ENCODE measurements at regions of chr5 and their contacts with region 1.

Region 1: DNA sequence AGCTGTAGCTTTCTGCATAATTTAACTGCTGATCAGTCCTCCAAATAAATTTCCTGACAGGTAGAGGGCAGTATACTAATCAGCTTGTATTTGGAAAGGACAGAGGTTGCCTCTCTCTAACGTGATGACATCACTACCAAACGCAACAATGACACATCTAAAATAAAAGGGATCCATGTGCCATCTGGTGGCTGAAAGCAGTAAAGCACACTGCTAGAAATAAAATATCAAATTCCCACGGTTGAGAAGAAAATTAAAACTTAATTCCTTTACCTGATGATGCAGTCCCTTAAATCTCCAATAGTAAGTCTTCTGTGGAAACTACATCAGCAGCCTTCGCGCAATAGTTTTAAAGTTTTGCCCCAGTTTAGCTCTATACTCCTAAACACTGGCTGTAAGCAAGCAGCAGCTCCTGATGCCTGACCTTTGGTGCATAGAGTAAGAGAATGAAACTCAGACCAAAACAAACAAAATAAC is 54.5 kb downstream of the DIAPH1 start:
- DNase-seq: peak in 3 of 5 donors; percentile 51 to 75 (median 72)
- ATAC-seq: peak; percentile 50 to 70 (median 59)
- H3K4me3 ChIP-seq: no peak overlapping the region
- H3K27ac ChIP-seq: peak overlapping the region in 11 of 12 donors; percentile 37 to 75 (median 61)
- H3K4me1 ChIP-seq: peaks cover 3 to 35% (median 23%) of the 10 kb centered on the region in 12 donors
- H3K27me3 ChIP-seq: no peaks in the 10 kb centered on the region
- CTCF ChIP-seq: peak; percentile 93 to 99 (median 96)
- POLR2A ChIP-seq: no peak

Region 2: GRCh38 chr5:141094481-141095262 is 469.6 kb before region 1 on chr5 and contains the start of gene PCDHB2:
- intact Hi-C with region 1: loop called in 3 of 10 experiments (anchors 10 kb)
- DNase-seq: peak in 2 of 5 donors; percentile 27 to 71
- ATAC-seq: peak; percentile 45 to 79 (median 52)
- H3K4me3 ChIP-seq: peak within 1 kb of the TSS in 11 of 12 donors; percentile 2 to 62 (median 44)
- H3K27ac ChIP-seq: peak within 1 kb of the TSS in 2 of 12 donors; percentile 36 to 37
- H3K4me1 ChIP-seq: no peaks in the 10 kb centered on the region
- H3K27me3 ChIP-seq: peaks cover 0 to 26% (median 14%) of the 10 kb centered on the region in 9 donors
- CTCF ChIP-seq: peak in 11 of 12 donors; percentile 15 to 51 (median 37)
- POLR2A ChIP-seq: no peak
- total RNA-seq, gene PCDHB2: 0.70 to 4.3 (median 2.3) TPM

Region 3: DNA sequence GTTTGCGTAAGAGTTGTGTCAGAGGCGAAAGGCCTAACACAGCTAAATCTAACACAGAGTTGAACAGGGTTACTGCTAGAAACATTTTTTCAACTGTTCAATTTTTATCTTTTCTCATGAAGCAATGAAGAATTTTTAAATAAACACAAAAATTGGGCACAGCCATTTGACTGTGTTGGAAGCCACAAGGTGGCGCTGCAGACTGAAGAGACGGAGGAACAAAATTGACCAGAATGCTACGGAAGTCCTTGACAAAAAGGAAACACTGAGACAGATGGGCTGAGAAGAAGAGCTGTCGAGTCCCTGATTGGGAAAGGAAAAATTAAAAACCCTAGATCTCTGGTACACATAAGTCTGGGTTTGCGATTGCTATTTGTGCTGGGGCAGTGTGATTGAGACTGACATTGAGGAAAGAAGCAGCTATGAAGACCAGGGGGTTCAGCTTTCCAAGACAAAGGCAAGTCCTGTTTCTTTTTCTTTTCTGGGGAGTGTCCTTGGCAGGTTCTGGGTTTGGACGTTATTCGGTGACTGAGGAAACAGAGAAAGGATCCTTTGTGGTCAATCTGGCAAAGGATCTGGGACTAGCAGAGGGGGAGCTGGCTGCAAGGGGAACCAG is 377.2 kb before region 1 on chr5 and contains the start of gene PCDHB9:
- intact Hi-C with region 1: loop called in 2 of 10 experiments (anchors 5 to 10 kb)
- DNase-seq: no peak
- ATAC-seq: no peak
- H3K4me3 ChIP-seq: peak within 1 kb of the TSS in 1 of 12 donors; percentile 10
- H3K27ac ChIP-seq: no peak within 1 kb of the TSS
- H3K4me1 ChIP-seq: no peaks in the 10 kb centered on the region
- H3K27me3 ChIP-seq: peaks cover 0 to 52% (median 0%) of the 10 kb centered on the region in 9 donors
- CTCF ChIP-seq: peak in 9 of 12 donors; percentile 7 to 42 (median 34)
- POLR2A ChIP-seq: no peak
- total RNA-seq, gene PCDHB9: 0.62 to 1.6 (median 0.99) TPM

Region 4: DNA sequence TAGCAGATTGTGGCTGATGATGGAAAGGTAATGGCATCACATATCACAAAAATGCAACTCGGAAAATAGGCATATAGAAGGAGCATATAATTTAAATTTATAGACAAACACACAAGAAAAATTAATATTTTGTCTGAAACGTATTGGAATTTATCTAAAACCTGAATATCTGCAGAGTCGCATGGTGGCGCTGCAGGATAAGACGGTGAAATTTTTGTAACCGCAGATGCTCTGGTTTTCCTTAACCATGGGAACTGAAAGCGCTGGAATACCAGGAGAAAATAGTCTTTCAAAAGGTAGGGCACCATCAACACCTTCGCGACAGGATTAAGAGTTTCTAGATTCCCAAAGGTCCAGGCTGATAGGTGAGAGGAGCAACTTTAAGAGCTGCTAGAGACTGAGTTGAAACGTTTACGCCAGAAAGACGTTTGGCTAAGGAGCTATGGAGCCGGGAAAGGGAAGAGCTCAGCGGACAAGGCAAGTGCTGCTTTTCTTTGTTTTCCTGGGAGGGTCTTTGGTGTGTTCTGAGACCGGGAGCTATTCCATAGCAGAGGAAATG is 330.1 kb before region 1 on chr5:
- intact Hi-C with region 1: loop called in 1 of 10 experiments (anchors 5 kb)
- DNase-seq: no peak
- ATAC-seq: no peak
- H3K4me3 ChIP-seq: peak overlapping the region in 9 of 12 donors; percentile 16 to 42 (median 29)
- H3K27ac ChIP-seq: no peak overlapping the region
- H3K4me1 ChIP-seq: peaks cover 0 to 3% (median 0%) of the 10 kb centered on the region in 12 donors
- H3K27me3 ChIP-seq: peaks cover 0 to 7% (median 0%) of the 10 kb centered on the region in 9 donors
- CTCF ChIP-seq: peak in 6 of 12 donors; percentile 13 to 38 (median 30)
- POLR2A ChIP-seq: no peak

Region 5: GRCh38 chr5:141260458-141261237 is 303.6 kb before region 1 on chr5:
- intact Hi-C with region 1: no loop called
- DNase-seq: no peak
- ATAC-seq: no peak
- H3K4me3 ChIP-seq: no peak overlapping the region
- H3K27ac ChIP-seq: no peak overlapping the region
- H3K4me1 ChIP-seq: no peaks in the 10 kb centered on the region
- H3K27me3 ChIP-seq: no peaks in the 10 kb centered on the region
- CTCF ChIP-seq: no peak
- POLR2A ChIP-seq: no peak

Region 6: GRCh38 chr5:141326088-141326854 is 238.0 kb before region 1 on chr5:
- intact Hi-C with region 1: loop called in 8 of 10 experiments (anchors 2 to 10 kb)
- DNase-seq: peak; percentile 63 to 82 (median 74)
- ATAC-seq: peak; percentile 77 to 94 (median 92)
- H3K4me3 ChIP-seq: peak overlapping the region; percentile 14 to 63 (median 52)
- H3K27ac ChIP-seq: peak overlapping the region; percentile 36 to 84 (median 76)
- H3K4me1 ChIP-seq: peaks cover 0 to 9% (median 1%) of the 10 kb centered on the region in 12 donors
- H3K27me3 ChIP-seq: peaks cover 0 to 10% (median 0%) of the 10 kb centered on the region in 9 donors
- CTCF ChIP-seq: peak; percentile 37 to 71 (median 56)
- POLR2A ChIP-seq: peak in 1 of 2 donors; percentile 50

Region 7: DNA sequence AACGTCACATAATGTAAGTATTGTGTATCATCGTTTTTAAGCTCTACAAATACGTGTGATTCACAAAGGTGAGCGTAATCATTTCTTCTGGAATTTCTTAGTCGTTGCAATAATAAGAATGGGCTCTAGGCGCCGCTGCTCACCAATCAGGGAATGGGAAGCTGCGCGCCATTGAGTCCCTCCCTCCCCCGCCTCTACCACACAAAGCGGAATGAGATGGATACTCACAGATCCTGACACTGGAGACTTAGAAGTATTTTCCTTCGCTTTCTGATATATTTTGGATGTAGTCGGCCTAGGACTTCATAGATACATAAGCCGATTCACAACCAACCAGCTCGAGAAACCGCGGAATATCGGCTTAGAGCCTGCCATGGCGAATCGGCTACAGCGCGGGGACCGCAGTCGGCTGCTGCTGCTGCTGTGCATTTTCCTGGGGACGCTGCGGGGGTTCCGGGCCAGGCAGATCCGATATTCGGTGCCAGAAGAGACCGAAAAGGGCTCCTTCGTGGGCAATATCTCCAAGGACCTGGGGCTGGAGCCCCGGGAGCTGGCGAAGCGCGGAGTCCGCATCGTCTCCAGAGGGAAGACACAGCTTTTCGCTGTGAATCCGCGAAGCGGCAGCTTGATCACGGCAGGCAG is 143.3 kb before region 1 on chr5 and contains the start of gene PCDHGA11:
- intact Hi-C with region 1: loop called in 5 of 10 experiments (anchors 2 to 10 kb)
- DNase-seq: peak in 3 of 5 donors; percentile 40 to 64 (median 61)
- ATAC-seq: peak in 2 of 4 donors; percentile 52 to 62
- H3K4me3 ChIP-seq: peak within 1 kb of the TSS in 10 of 12 donors; percentile 9 to 45 (median 40)
- H3K27ac ChIP-seq: no peak within 1 kb of the TSS
- H3K4me1 ChIP-seq: peaks cover 0 to 12% (median 1%) of the 10 kb centered on the region in 12 donors
- H3K27me3 ChIP-seq: peaks cover 0 to 76% (median 0%) of the 10 kb centered on the region in 9 donors
- CTCF ChIP-seq: peak; percentile 28 to 57 (median 48)
- POLR2A ChIP-seq: no peak
- total RNA-seq, gene PCDHGA11: 2.8 to 9.0 (median 5.3) TPM

Region 8: DNA sequence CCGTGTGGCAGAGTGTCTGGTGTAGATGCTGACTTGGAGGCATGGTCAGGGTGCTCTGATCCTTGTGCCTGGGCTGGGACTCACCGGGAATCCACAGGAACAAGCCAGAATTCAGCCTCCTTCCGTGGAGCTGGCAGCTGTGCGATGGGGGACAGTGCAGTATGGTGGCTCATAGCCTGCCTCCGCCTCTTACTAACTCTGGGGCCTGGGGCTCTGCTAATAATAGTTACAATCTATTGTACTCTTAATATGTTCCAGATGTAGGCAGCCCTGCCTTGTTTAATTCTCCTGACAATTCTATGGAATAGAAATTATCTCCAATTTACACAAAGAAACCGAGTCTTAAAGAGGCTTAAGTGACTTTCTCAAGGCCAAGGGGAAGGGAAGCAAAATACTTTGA is 236.4 kb after region 1 on chr5:
- intact Hi-C with region 1: no loop called
- DNase-seq: no peak
- ATAC-seq: peak in 1 of 4 donors; percentile 10
- H3K4me3 ChIP-seq: no peak overlapping the region
- H3K27ac ChIP-seq: no peak overlapping the region
- H3K4me1 ChIP-seq: peaks cover 0 to 33% (median 20%) of the 10 kb centered on the region in 12 donors
- H3K27me3 ChIP-seq: peaks cover 0 to 11% (median 0%) of the 10 kb centered on the region in 9 donors
- CTCF ChIP-seq: no peak
- POLR2A ChIP-seq: no peak